T-cell (primary cell): ENCODE measurements at regions of chr18 and their contacts with region 1.

Region 1: DNA sequence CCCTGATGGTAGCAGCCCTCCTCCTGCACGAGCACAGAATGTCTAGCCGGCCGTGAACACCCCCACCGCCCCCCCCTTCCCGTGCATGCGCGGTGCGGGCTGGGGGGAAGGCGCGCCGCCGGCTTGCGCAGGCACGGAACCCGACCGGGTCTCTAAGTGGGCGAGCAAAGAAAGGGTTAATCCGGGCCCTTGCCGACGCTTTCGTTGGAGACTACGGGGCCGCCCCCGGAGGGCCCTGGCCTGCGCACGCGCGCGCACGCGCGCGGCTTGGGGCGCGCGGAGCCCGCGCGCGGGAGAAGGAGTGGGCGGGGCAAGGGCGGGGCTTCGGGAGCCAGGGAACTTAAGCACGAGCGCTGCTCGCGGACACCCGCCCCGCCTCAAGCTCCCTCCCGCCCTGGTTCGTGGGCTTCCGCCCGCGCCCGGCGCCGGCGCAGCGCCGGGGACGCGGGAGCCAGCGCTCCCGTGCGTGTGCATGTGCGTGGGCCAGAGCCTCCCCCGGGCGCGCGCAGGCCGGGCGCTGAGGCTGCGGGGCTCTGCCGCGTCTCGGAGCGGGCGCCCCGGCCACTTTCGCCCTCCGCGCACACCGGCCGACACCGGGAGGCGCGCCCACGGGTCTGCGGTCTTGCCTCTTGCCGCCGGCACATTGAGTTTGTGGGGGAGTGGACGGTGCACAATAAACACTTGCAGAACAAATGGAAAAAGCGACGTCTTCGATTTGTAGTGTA is 617 bp upstream of the ZBTB14 start:
- DNase-seq: peak; percentile 91 to 99 (median 96)
- ATAC-seq: peak; percentile 64 to 74 (median 68)
- H3K4me3 ChIP-seq: peak overlapping the region; percentile 85 to 92
- H3K4me3 Mint-ChIP-seq: peak overlapping the region; percentile 87 to 99 (median 89)
- H3K27ac ChIP-seq: peak overlapping the region; percentile 95
- H3K27ac Mint-ChIP-seq: peak overlapping the region; percentile 94 to 98
- H3K4me1 ChIP-seq: peaks cover 20 to 31% of the 10 kb centered on the region in 2 experiments
- H3K4me1 Mint-ChIP-seq: peaks cover 38 to 42% (median 42%) of the 10 kb centered on the region in 3 donors
- H3K27me3 ChIP-seq: no peaks in the 10 kb centered on the region
- H3K27me3 Mint-ChIP-seq: no peaks in the 10 kb centered on the region

Region 2: GRCh38 chr18:5237723-5238370 is 58.3 kb before region 1 on chr18:
- CTCF ChIA-PET with region 1: interaction called, 5 to 38 read pairs
- POLR2A ChIA-PET with region 1: interaction called, 12 to 64 read pairs
- DNase-seq: peak; percentile 64 to 93 (median 82)
- ATAC-seq: peak; percentile 87 to 93 (median 90)
- H3K4me3 ChIP-seq: peak overlapping the region; percentile 95 to 99
- H3K4me3 Mint-ChIP-seq: peak overlapping the region; percentile 95
- H3K27ac ChIP-seq: peak overlapping the region; percentile 96
- H3K27ac Mint-ChIP-seq: peak overlapping the region; percentile 97 to 98
- H3K4me1 ChIP-seq: peaks cover 21 to 28% of the 10 kb centered on the region in 2 experiments
- H3K4me1 Mint-ChIP-seq: peaks cover 51 to 65% (median 55%) of the 10 kb centered on the region in 3 donors
- H3K27me3 ChIP-seq: peaks cover 0 to 2% of the 10 kb centered on the region in 2 experiments
- H3K27me3 Mint-ChIP-seq: peaks cover 0 to 7% of the 10 kb centered on the region in 2 donors

Region 3: DNA sequence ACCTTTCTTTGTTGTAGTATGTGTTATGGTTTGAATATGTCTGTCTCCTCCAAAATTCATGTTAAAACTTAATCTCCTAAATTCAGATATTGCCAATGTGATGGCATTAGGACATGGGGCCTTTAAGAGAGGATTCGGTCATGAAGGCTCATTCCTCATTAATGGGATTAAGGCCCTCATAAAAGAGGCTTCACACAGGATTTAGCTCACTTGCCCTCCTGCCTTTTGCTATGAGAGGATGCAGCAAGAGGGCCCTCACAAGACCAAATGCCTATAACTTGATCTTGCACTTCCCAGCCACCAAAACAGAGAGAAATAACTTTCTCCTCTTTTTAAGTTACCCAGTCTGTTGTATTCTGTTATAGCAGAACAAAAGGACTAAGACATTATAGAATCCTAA is 20.3 kb before region 1 on chr18:
- CTCF ChIA-PET with region 1: no interaction called
- POLR2A ChIA-PET with region 1: no interaction called
- DNase-seq: no peak
- ATAC-seq: no peak
- H3K4me3 ChIP-seq: no peak overlapping the region
- H3K4me3 Mint-ChIP-seq: no peak overlapping the region
- H3K27ac ChIP-seq: no peak overlapping the region
- H3K27ac Mint-ChIP-seq: no peak overlapping the region
- H3K4me1 ChIP-seq: no peaks in the 10 kb centered on the region
- H3K4me1 Mint-ChIP-seq: no peaks in the 10 kb centered on the region
- H3K27me3 ChIP-seq: no peaks in the 10 kb centered on the region
- H3K27me3 Mint-ChIP-seq: peaks cover 0 to 3% of the 10 kb centered on the region in 2 donors